SK-N-SH (cell line): ENCODE measurements at regions of chr2 and their contacts with region 1.

Region 1: DNA sequence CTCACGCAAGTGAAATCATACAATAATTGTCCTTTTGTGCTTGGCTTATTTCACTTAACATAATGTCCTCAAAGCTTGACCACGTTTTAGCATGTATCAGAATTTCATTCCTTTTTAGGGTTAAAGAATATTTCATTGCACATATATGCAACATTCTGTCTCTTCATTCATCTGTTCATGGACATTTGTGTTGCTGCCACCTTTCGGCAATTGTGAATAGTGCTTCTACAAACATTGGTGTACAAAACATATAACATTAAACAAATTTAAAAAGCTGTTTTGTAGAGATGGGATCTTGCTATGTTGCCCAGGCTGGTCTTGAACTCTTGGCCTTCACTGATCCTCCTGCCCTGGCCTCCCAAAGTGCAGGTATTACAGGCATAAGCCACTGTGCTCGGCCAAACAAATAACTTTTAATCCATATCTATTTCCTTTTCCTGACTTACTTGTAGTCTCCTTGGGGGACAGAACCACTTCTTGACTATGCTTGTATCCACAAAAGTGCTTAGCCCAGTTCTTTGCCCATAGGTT is 209.3 kb downstream of the SLC4A3 start:
- DNase-seq: no peak
- H3K4me3 ChIP-seq: no peak overlapping the region
- H3K27ac ChIP-seq: no peak overlapping the region
- H3K4me1 ChIP-seq: no peaks in the 10 kb centered on the region
- H3K27me3 ChIP-seq: no peaks in the 10 kb centered on the region; the same call in 1 of the 2 replicates
- CTCF ChIP-seq: peak; percentile 69
- EP300 ChIP-seq: no peak
- RAD21 ChIP-seq: peak; percentile 47

Region 2: DNA sequence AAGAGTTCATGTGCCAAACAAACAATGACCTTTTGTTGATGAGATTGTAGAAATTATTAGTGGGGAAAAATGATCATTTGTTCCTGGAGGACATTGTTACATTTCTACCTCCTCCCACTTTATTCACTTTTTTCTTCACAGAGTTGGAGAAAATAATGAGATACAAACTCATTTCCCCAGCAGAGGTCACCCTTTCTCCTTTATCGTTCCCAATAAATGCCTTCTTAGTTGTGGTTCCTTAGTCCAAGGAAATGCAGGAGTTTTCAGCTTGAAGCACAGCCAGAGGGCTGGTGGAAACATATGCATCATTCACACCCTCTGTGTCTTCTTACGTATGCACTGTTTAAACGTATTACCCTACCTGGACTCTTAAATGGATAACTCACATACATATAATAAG is 100.5 kb before region 1 on chr2:
- CTCF ChIA-PET with region 1: interaction called, 11 read pairs
- POLR2A ChIA-PET with region 1: no interaction called
- DNase-seq: peak; percentile 49
- H3K4me3 ChIP-seq: no peak overlapping the region; a peak in 1 of 4 replicates
- H3K27ac ChIP-seq: no peak overlapping the region
- H3K4me1 ChIP-seq: no peaks in the 10 kb centered on the region
- H3K27me3 ChIP-seq: peaks cover 4% of the 10 kb centered on the region; the same call in 1 of the 2 replicates
- CTCF ChIP-seq: peak; percentile 69
- EP300 ChIP-seq: no peak
- RAD21 ChIP-seq: peak; percentile 77

Region 3: DNA sequence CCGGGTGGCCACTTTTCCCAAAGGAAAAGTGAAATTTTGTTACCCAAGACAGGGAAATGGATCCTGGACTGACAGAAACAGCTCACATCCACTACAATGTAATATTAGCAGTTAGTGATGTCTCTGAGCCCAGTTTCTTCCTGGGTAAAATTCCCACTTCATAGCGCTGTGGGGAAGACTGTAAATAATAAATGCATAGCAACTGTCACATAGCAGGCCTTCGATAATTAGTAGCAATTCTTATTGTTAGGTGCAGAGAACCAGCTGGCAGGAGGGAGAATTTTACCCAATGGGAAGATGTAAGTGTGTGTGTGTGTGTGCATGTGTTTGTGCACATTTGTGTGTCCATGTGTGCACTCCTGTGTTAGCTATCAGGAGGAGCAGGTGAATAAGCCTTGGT is 12.2 kb after region 1 on chr2:
- CTCF ChIA-PET with region 1: interaction called, 10 read pairs
- POLR2A ChIA-PET with region 1: no interaction called
- DNase-seq: no peak
- H3K4me3 ChIP-seq: no peak overlapping the region
- H3K27ac ChIP-seq: no peak overlapping the region
- H3K4me1 ChIP-seq: no peaks in the 10 kb centered on the region
- H3K27me3 ChIP-seq: peaks cover 1% of the 10 kb centered on the region; the same call in 1 of the 2 replicates
- CTCF ChIP-seq: no peak
- EP300 ChIP-seq: no peak
- RAD21 ChIP-seq: no peak